Gastrocnemius medialis (tissue), 4 donors: ENCODE measurements at regions of chr15 and their contacts with region 1.

Region 1: DNA sequence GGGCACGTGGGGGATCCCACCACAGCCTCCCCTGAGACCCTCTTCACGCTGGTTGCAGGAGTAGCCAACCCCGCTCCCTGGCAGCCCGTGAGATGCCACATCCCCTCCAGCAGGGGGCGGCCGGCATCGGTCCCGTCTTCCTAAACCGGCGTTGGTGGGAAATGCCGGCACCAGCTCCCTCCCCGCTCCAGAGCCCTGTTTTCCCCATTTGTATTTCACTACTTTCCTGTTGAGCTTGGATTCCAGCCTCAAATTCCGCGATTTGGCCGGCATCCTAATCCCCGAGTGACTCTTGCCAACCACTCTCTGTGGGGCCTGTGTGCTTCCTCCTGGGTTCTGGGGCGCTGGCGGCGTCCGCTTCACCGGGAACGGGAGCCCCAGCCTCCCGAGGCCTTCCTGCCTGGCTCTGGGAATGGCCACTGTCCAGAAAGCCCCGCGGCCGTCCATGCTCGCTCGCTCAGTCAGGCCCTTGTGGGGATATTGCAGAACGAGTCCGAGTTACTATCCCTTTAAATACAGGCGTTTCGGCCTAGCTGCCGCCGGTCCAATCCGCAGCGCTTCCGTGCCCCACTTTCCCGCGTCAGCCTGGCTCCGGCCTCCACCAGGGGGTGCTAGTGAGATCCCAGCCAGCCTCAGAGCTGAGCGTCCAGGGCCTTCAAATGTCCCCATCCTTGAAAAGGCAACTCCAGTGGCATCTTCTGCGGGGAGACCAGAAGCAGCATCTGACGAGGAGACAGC is 8.1 kb upstream of the ADAMTS17 start:
- DNase-seq: peak; percentile 89 to 94
- ATAC-seq: peak; percentile 96 to 98
- H3K4me3 ChIP-seq: peak overlapping the region; percentile 77 to 82 (median 80)
- H3K27ac ChIP-seq: peak overlapping the region; percentile 95 to 96 (median 96)
- H3K4me1 ChIP-seq: peaks cover 8 to 9% of the 10 kb centered on the region in 2 donors
- H3K27me3 ChIP-seq: no peaks in the 10 kb centered on the region
- CTCF ChIP-seq: peak; percentile 76 to 90 (median 87)
- POLR2A ChIP-seq: peak; percentile 55 to 63

Region 2: GRCh38 chr15:100433300-100433699 is 83.4 kb after region 1 on chr15:
- in situ Hi-C with region 1: no loop called
- intact Hi-C with region 1: loop called (anchors 5 kb)
- DNase-seq: no peak
- ATAC-seq: no peak
- H3K4me3 ChIP-seq: no peak overlapping the region
- H3K27ac ChIP-seq: no peak overlapping the region
- H3K4me1 ChIP-seq: peaks cover 12 to 16% of the 10 kb centered on the region in 2 donors
- H3K27me3 ChIP-seq: no peaks in the 10 kb centered on the region
- CTCF ChIP-seq: no peak
- POLR2A ChIP-seq: no peak

Region 3: DNA sequence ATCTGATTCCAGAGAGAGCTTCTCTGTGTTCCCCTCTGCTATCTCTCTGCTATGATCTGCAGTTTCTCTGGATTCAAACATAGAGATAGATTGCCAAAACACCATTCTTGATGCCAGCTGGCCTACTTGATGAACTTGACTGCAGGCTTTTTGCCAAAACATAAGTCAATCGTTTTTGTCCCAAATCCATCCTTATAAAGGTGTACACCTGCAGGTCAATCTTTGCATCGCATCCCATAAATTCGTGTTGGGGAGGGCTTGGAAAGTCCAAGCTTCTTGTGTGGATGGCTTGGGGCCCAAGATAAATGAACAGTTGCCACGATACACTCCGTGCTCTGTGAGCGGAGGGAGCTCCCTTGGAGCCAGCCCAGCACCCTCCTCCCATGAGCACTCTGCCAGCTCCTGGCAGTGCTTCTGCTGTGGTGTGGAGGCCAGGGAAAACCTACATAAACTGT is 176.2 kb after region 1 on chr15:
- in situ Hi-C with region 1: no loop called
- intact Hi-C with region 1: loop called (anchors 1 kb)
- DNase-seq: peak; percentile 84 to 90
- ATAC-seq: peak; percentile 85
- H3K4me3 ChIP-seq: peak overlapping the region in 1 of 4 donors; percentile 24
- H3K27ac ChIP-seq: peak overlapping the region; percentile 84 to 88 (median 86)
- H3K4me1 ChIP-seq: peaks cover 24 to 49% of the 10 kb centered on the region in 2 donors
- H3K27me3 ChIP-seq: no peaks in the 10 kb centered on the region
- CTCF ChIP-seq: peak in 4 of 5 experiments; percentile 4 to 40 (median 15)
- POLR2A ChIP-seq: no peak

Region 4: GRCh38 chr15:100572362-100572983 is 222.6 kb after region 1 on chr15:
- in situ Hi-C with region 1: loop called (anchors 5 to 10 kb)
- intact Hi-C with region 1: loop called (anchors 1 kb)
- DNase-seq: no peak
- ATAC-seq: peak in 1 of 2 donors; percentile 36
- H3K4me3 ChIP-seq: no peak overlapping the region
- H3K27ac ChIP-seq: no peak overlapping the region
- H3K4me1 ChIP-seq: peaks cover 0 to 9% of the 10 kb centered on the region in 2 donors
- H3K27me3 ChIP-seq: no peaks in the 10 kb centered on the region
- CTCF ChIP-seq: peak; percentile 51 to 69 (median 61)
- POLR2A ChIP-seq: no peak

Region 5: GRCh38 chr15:100596792-100597191 is 246.9 kb after region 1 on chr15:
- in situ Hi-C with region 1: no loop called
- intact Hi-C with region 1: no loop called
- DNase-seq: no peak
- ATAC-seq: no peak
- H3K4me3 ChIP-seq: no peak overlapping the region
- H3K27ac ChIP-seq: no peak overlapping the region
- H3K4me1 ChIP-seq: peaks cover 8 to 19% of the 10 kb centered on the region in 2 donors
- H3K27me3 ChIP-seq: no peaks in the 10 kb centered on the region
- CTCF ChIP-seq: no peak
- POLR2A ChIP-seq: no peak

Region 6: DNA sequence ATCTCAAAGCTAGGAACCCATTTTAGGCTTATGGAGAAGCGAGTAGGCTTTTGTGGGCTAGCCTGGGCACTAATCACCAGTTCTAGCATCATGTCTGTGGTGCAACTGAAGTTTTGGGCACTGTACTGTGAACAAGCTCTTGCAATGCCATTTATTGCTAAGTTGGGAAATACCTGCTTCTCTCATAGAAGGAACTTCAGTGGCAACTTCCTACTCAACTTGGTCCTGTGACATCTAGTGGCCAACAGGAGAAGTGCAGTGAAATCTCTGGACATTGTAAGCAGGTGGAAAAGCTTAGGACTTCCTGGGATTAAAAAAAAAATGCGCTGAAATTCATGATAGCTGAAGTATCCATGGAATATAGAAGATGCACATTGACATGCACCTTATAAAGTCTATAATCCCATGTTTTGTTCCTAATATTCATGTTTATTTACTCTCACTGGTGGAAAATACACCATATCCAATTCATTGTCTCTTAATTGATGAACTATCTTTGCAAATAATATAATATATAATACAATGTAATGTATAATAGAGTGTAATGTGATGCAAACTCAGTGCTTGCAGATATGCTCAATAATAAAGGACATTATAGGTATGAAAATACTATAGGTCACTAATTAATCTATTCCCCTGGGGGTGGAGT is 523.3 kb after region 1 on chr15:
- in situ Hi-C with region 1: no loop called
- intact Hi-C with region 1: loop called (anchors 5 kb)
- DNase-seq: peak in 1 of 2 donors; percentile 60
- ATAC-seq: peak; percentile 77 to 96
- H3K4me3 ChIP-seq: no peak overlapping the region
- H3K27ac ChIP-seq: no peak overlapping the region
- H3K4me1 ChIP-seq: no peaks in the 10 kb centered on the region
- H3K27me3 ChIP-seq: peaks cover 0 to 5% (median 0%) of the 10 kb centered on the region in 3 donors
- CTCF ChIP-seq: peak; percentile 83 to 95 (median 89)
- POLR2A ChIP-seq: no peak

Region 7: DNA sequence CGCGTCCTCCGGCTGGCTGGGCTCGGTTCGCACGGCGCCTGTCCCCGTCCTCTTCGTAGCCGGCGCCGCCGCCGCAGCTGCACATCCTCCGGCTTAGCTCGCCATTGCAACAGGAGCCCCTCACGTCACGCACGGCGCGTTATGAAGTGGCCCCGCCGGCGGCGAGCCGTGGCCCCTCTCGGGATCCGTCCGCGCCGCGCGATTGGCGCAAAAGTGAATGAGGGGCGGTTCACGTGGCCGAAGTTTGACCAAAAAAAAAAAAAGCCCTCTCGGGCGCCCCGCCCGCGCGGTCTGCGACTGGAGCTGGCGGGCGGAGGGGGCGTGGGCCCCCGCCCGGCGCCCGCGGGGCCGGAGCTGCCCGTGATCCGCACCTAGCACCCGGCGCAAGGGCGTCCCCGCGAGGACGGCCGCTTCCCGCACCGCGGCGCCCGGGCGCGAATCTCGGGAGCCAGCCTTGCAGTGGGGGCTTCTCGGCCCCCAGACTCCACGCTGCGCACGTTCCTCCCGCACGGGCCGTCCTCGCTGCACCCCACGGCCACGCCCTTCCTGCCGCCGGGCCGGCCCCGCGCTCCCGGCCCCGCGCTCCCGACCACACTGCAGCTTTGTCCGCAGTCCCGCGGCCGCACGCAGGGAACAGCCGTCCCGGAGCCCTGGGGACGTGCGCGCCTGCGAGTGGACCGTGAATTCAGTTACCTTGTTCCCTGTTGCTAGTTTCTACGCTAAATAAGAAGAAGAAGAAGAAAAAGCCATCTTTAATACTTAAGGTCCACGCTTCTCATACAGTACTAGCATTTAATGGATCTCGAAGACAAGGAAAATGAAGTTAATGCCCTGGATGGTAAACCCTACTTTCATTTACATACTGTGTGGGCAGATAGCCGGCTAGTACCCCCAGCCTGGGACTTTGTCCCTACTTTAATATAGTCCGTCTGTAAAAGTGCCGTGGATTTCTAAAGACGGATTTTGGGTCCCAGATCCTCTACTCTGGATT is 902.3 kb after region 1 on chr15 and contains the start of gene CHSY1:
- in situ Hi-C with region 1: no loop called
- intact Hi-C with region 1: loop called (anchors 10 kb)
- DNase-seq: peak; percentile 84 to 90
- ATAC-seq: peak; percentile 92 to 93
- H3K4me3 ChIP-seq: peak within 1 kb of the TSS; percentile 74 to 87 (median 82)
- H3K27ac ChIP-seq: peak within 1 kb of the TSS; percentile 74 to 88 (median 86)
- H3K4me1 ChIP-seq: peaks cover 30 to 36% of the 10 kb centered on the region in 2 donors
- H3K27me3 ChIP-seq: no peaks in the 10 kb centered on the region
- CTCF ChIP-seq: peak in 3 of 5 experiments; percentile 7 to 37 (median 33)
- POLR2A ChIP-seq: peak; percentile 90 to 93
- total RNA-seq, gene CHSY1: 4.6 to 8.3 (median 7.1) TPM